ENCODE measurements at regions of chr9 and their contacts with region 1.

Region 1: DNA sequence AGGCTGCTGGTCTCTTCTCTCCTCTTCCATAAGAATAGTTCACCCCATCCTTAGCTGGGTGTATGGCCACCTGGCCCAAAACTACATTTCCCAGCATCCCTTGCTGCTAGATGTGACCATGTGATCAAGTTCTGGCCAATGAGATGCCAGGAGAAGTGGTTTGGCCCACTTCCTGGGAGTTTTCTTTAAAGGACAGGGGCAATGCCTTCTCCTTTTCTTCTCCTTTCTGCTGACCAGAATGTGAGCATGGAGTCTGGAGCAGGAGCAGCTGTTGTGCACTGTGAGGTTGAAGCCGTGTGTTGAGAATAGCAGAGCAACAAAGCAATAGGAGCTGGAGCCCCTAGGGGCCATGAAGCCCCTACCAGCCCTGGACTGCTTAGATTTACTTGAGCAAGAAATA is 36.8 kb downstream of the C9orf50 start:
- DNase-seq: peak in 9 of 10 donors; percentile 42 to 82 (median 64)
- ATAC-seq: peak; percentile 67 to 78
- H3K4me3 Mint-ChIP-seq: peak overlapping the region in 6 of 10 donors; percentile 15 to 43 (median 24)
- H3K27ac Mint-ChIP-seq: peak overlapping the region; percentile 57 to 93 (median 77)
- H3K4me1 Mint-ChIP-seq: peaks cover 27 to 63% (median 41%) of the 10 kb centered on the region in 4 donors
- H3K27me3 Mint-ChIP-seq: no peaks in the 10 kb centered on the region

Region 2: DNA sequence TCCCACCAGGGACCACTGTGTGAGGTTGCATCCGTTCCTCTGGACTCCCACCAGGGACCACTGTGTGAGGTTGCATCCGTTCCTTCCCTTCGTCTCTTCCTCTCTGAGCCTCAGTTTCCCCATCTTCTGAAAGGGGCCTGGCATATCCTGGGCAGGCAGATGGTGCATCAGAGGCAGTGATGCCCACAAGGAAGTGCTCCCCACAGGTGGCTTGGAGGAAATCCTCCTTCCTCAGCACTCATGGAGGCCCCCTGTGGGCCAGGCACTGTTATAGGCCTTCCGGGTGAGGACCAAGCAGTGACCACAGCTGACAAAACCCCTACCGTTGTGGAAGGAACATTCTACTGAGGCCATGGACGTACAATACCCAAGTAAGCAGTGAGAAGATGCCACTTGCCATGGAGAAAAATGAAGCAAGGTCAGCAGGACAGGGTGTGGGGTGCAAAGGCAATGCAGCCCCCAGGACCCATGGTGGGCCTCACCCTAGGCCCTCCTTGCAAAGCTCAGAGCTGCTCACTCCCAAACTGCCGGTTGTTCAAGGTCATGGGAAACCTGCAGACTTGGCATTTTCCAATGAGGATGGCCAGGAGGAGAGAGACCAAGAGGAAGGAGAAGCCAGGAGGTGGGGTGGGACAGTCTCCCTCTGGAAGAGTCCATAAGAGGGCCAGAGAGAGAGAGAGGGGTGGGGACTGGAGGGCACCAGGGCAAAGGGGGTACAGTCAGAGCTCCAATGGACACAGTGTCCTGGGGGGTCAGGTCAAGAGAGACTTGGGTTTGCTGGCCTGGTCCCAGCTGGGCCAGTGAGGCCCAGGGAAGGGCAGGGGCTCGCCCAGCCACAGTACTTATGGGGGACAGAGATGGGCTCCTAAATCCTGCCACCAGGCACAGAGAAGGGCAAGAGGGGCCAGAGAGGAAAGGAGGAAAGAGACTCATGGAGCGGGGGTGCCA is 14.4 kb before region 1 on chr9:
- POLR2A ChIA-PET with region 1: no interaction called
- DNase-seq: no peak
- ATAC-seq: peak; percentile 43 to 45
- H3K4me3 Mint-ChIP-seq: peak overlapping the region; percentile 66 to 87 (median 83)
- H3K27ac Mint-ChIP-seq: peak overlapping the region in 5 of 10 donors; percentile 48 to 85 (median 75)
- H3K4me1 Mint-ChIP-seq: peaks cover 11 to 17% (median 17%) of the 10 kb centered on the region in 4 donors
- H3K27me3 Mint-ChIP-seq: peaks cover 4 to 34% (median 20%) of the 10 kb centered on the region in 5 donors

Region 3: DNA sequence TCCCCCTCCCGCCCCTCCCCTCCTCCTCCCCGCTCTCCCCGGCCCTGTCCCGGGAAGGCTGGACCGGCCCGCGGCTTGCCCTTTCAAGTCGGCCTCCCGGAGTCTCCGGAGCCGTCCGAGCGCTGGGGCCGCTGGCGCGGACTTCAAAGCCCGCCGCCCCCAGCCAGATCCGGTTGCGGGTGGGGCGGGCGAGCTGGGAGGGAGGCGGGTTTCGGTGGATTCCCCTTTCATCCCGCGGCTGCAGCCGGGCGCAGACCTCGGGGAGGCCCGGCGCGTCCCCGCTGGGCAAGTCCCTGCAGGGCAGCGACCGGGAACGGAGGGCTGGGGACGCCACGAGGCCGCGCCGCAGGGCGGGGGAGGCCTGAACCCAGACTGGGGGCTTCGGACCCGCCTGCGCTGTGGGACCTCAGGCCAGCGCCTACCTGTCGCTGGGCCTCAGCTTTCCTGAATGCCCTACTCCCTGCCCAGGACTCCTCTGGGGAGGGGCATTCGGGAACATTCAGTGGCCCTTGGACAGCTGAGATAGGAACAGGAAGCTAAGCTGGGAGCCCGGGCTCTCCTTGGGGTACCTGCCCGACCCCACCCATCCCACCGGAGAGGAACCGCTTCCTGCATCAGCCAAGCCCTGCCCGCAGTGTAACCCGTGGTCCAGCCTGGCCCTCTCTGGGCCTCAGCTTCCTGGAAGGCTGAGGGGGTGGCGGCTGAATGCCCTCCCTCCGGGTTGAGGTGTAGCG is 13.4 kb after region 1 on chr9:
- POLR2A ChIA-PET with region 1: interaction called, 18 read pairs
- DNase-seq: peak in 2 of 10 donors; percentile 31 to 38
- ATAC-seq: peak; percentile 65 to 75
- H3K4me3 Mint-ChIP-seq: peak overlapping the region; percentile 60 to 76 (median 68)
- H3K27ac Mint-ChIP-seq: peak overlapping the region in 6 of 10 donors; percentile 19 to 92 (median 62)
- H3K4me1 Mint-ChIP-seq: peaks cover 17 to 32% (median 25%) of the 10 kb centered on the region in 4 donors
- H3K27me3 Mint-ChIP-seq: peaks cover 0 to 13% (median 0%) of the 10 kb centered on the region in 5 donors